ENCODE measurements at regions of chr18 and their contacts with region 1.

Region 1: GRCh38 chr18:48142363-48142762 is 211.9 kb upstream of the SMAD2 start:
- DNase-seq: no peak
- H3K4me3 ChIP-seq: no peak overlapping the region
- H3K27ac ChIP-seq: peak overlapping the region in 1 of 2 experiments; percentile 58; a peak in 1 of 4 replicates
- H3K4me1 ChIP-seq: peaks cover 0 to 64% of the 10 kb centered on the region in 2 experiments; a peak in 2 of 4 replicates
- H3K27me3 ChIP-seq: peaks cover 19% of the 10 kb centered on the region; the same call in 1 of the 2 replicates
- CTCF ChIP-seq: no peak
- EP300 ChIP-seq: no peak
- RAD21 ChIP-seq: no peak

Region 2: GRCh38 chr18:47970664-47971531 is 171.5 kb before region 1 on chr18:
- CTCF ChIA-PET with region 1: no interaction called
- POLR2A ChIA-PET with region 1: no interaction called
- DNase-seq: no peak
- H3K4me3 ChIP-seq: no peak overlapping the region
- H3K27ac ChIP-seq: no peak overlapping the region
- H3K4me1 ChIP-seq: peaks cover 0 to 4% of the 10 kb centered on the region in 2 experiments; a peak in 1 of 4 replicates
- H3K27me3 ChIP-seq: no peaks in the 10 kb centered on the region; the same call in 1 of the 2 replicates
- CTCF ChIP-seq: no peak
- EP300 ChIP-seq: no peak
- RAD21 ChIP-seq: no peak

Region 3: GRCh38 chr18:48124857-48125626 is 17.3 kb before region 1 on chr18:
- CTCF ChIA-PET with region 1: no interaction called
- POLR2A ChIA-PET with region 1: no interaction called
- DNase-seq: no peak
- H3K4me3 ChIP-seq: no peak overlapping the region
- H3K27ac ChIP-seq: peak overlapping the region in 1 of 2 experiments; percentile 72; a peak in 1 of 4 replicates
- H3K4me1 ChIP-seq: peaks cover 0 to 64% of the 10 kb centered on the region in 2 experiments; a peak in 2 of 4 replicates
- H3K27me3 ChIP-seq: no peaks in the 10 kb centered on the region
- CTCF ChIP-seq: no peak
- EP300 ChIP-seq: no peak
- RAD21 ChIP-seq: no peak

Region 4: GRCh38 chr18:48153641-48154481 is 11.5 kb after region 1 on chr18:
- CTCF ChIA-PET with region 1: interaction called, 15 read pairs
- POLR2A ChIA-PET with region 1: interaction called, 4 read pairs
- DNase-seq: no peak
- H3K4me3 ChIP-seq: no peak overlapping the region
- H3K27ac ChIP-seq: no peak overlapping the region
- H3K4me1 ChIP-seq: peaks cover 0 to 35% of the 10 kb centered on the region in 2 experiments; a peak in 2 of 4 replicates
- H3K27me3 ChIP-seq: 0 out of 2 replicates have a peak, but pooled peaks cover 11% of the 10 kb centered on the region
- CTCF ChIP-seq: no peak
- EP300 ChIP-seq: no peak
- RAD21 ChIP-seq: no peak

Measured in SK-N-SH (cell line).